ENCODE measurements at regions of chr7 and their contacts with region 1.

Region 1: DNA sequence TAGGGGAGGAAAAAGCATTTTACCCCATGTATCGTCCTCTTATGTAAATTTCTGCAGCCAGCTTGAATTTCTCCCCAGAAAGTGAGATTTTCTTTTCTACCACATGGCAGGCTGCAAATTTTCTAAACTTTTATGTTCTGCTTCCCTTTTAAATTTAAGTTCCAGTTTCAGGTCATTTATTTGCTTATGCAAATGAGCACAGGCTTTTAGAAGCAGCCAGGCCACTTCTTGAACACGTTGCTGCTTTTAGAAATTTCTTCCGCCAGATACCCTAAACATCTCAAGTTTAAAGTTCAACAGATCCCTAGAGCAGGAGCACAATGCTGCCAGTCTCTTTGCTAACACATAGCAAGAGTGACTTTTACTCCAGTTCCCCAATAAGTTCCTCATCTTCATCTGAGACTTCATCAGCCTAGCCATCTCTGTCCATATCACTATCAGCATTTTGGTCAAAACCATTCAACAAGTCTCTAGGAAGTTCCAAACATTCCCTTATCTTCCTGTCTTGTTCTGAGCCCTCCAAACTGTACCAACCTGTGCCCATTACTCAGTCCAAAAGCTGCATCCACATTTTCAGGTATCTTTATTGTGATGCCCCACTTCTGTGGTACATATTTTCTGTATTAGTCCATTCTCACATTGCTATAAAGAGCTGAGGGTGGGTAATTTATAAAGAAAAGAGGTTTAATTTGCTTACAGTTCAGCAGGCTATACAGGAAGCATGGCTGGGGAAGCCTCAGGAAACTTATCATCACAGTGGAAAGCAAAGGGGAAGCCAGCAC is 16.3 kb downstream of the EZH2 start:
- DNase-seq: no peak
- H3K4me3 ChIP-seq: no peak overlapping the region
- H3K27ac ChIP-seq: no peak overlapping the region
- H3K4me1 ChIP-seq: no peaks in the 10 kb centered on the region
- H3K27me3 ChIP-seq: no peaks in the 10 kb centered on the region
- CTCF ChIP-seq: no peak
- POLR2A ChIP-seq: no peak

Region 2: DNA sequence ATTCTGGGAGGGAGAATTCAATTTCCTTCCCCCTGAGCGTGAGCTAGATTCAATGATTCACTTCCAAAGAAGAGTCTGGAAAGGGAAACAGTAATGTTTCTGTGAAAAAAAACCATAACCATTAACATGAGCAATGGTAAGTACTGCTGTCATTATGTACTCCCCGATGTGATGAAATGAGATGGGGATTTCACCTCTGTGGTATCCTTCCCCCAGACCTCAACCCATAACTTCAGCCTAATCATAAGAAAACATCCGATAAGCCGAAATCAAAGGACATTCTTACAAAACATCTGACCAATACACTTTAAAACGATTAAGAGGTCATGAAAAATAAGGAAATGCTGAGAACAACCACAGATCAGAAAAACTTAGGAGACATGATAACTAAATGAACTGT is 10.9 kb before region 1 on chr7:
- CTCF ChIA-PET with region 1: interaction called, 12 read pairs
- POLR2A ChIA-PET with region 1: no interaction called
- dilution Hi-C with region 1: no loop called
- intact Hi-C with region 1: no loop called
- DNase-seq: no peak
- H3K4me3 ChIP-seq: no peak overlapping the region
- H3K27ac ChIP-seq: no peak overlapping the region
- H3K4me1 ChIP-seq: peaks cover 16% of the 10 kb centered on the region
- H3K27me3 ChIP-seq: no peaks in the 10 kb centered on the region
- CTCF ChIP-seq: no peak
- POLR2A ChIP-seq: no peak